IMR-90 (cell line): ENCODE measurements at regions of chr3 and their contacts with region 1.

Region 1: GRCh38 chr3:123584988-123585937 is at the start of gene HACD2:
- DNase-seq: peak; percentile 97
- ATAC-seq: peak; percentile 95
- H3K4me3 ChIP-seq: peak within 1 kb of the TSS; percentile 63
- H3K27ac ChIP-seq: peak within 1 kb of the TSS; percentile 94
- H3K4me1 ChIP-seq: no peaks in the 10 kb centered on the region
- H3K27me3 ChIP-seq: no peaks in the 10 kb centered on the region
- CTCF ChIP-seq: no peak
- POLR2A ChIP-seq: peak; percentile 39; the same call in 1 of the 2 replicates
- RAD21 ChIP-seq: no peak
- total RNA-seq, gene HACD2: 22.6 and 35.8 TPM in 2 replicates

Region 2: GRCh38 chr3:123301331-123302184 is 283.7 kb before region 1 on chr3:
- CTCF ChIA-PET with region 1: no interaction called
- POLR2A ChIA-PET with region 1: no interaction called
- dilution Hi-C with region 1: no loop called
- in situ Hi-C with region 1: no loop called
- intact Hi-C with region 1: no loop called
- DNase-seq: no peak
- ATAC-seq: peak; percentile 24; the same call in 1 of the 2 replicates
- H3K4me3 ChIP-seq: no peak overlapping the region
- H3K27ac ChIP-seq: no peak overlapping the region
- H3K4me1 ChIP-seq: no peaks in the 10 kb centered on the region
- H3K27me3 ChIP-seq: peaks cover 38% of the 10 kb centered on the region
- CTCF ChIP-seq: no peak
- POLR2A ChIP-seq: no peak
- RAD21 ChIP-seq: no peak

Region 3: GRCh38 chr3:123605789-123606234 is 20.5 kb after region 1 on chr3:
- CTCF ChIA-PET with region 1: interaction called, 3 read pairs
- POLR2A ChIA-PET with region 1: no interaction called
- dilution Hi-C with region 1: no loop called
- in situ Hi-C with region 1: no loop called
- intact Hi-C with region 1: loop called (anchors 1 kb)
- DNase-seq: no peak
- ATAC-seq: peak; percentile 1; the same call in 1 of the 2 replicates
- H3K4me3 ChIP-seq: no peak overlapping the region
- H3K27ac ChIP-seq: peak overlapping the region; percentile 63
- H3K4me1 ChIP-seq: peaks cover 22% of the 10 kb centered on the region
- H3K27me3 ChIP-seq: no peaks in the 10 kb centered on the region
- CTCF ChIP-seq: no peak
- POLR2A ChIP-seq: no peak
- RAD21 ChIP-seq: no peak

Region 4: DNA sequence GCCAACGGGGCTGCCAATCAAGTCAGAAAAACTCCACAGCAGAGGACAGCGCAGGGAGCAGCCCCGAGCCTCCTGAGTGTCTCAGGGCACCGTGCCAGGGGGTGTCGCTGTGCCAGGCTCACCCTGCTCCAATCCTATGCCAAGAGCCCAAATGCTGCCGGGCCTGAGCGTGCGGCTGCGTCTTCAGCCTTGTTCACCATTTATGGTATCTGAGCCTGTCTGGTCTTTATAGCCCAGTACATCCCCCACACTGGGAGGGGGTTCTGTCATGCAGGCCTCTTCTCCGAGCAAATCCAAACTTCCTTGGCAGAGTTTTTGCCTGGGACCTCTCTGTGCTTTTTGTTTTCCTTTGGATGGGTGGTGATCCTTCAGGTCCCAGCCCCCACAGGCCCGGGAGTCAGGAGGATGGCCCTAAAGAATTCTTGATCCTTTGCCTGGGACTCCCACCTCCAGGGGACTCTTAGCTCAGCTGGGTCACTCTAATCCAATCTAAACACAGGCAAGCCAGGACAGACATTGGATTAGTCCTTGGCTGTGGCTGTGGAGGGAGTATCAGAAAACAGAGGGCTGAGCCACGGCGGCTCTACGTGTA is 134.7 kb after region 1 on chr3:
- CTCF ChIA-PET with region 1: no interaction called
- POLR2A ChIA-PET with region 1: no interaction called
- dilution Hi-C with region 1: no loop called
- in situ Hi-C with region 1: no loop called
- intact Hi-C with region 1: loop called (anchors 1 kb)
- DNase-seq: no peak
- ATAC-seq: peak; percentile 2; the same call in 1 of the 2 replicates
- H3K4me3 ChIP-seq: no peak overlapping the region
- H3K27ac ChIP-seq: peak overlapping the region; percentile 67; the same call in 1 of the 2 replicates
- H3K4me1 ChIP-seq: peaks cover 20% of the 10 kb centered on the region
- H3K27me3 ChIP-seq: no peaks in the 10 kb centered on the region
- CTCF ChIP-seq: no peak
- POLR2A ChIP-seq: no peak
- RAD21 ChIP-seq: no peak

Region 5: GRCh38 chr3:124905849-124906248 is 1320.6 kb after region 1 on chr3:
- CTCF ChIA-PET with region 1: no interaction called
- POLR2A ChIA-PET with region 1: no interaction called
- dilution Hi-C with region 1: no loop called
- in situ Hi-C with region 1: no loop called
- intact Hi-C with region 1: no loop called
- DNase-seq: no peak
- ATAC-seq: no peak
- H3K4me3 ChIP-seq: no peak overlapping the region
- H3K27ac ChIP-seq: no peak overlapping the region
- H3K4me1 ChIP-seq: no peaks in the 10 kb centered on the region
- H3K27me3 ChIP-seq: peaks cover 23% of the 10 kb centered on the region
- CTCF ChIP-seq: no peak
- POLR2A ChIP-seq: no peak
- RAD21 ChIP-seq: no peak